ENCODE measurements at regions of chr20 and their contacts with region 1.

Region 1: GRCh38 chr20:2470423-2471193 is at the start of gene SNRPB:
- DNase-seq: peak; percentile 99
- ATAC-seq: peak; percentile 98
- H3K4me3 ChIP-seq: peak within 1 kb of the TSS; percentile 89 to 93 (median 90)
- H3K27ac ChIP-seq: peak within 1 kb of the TSS; percentile 89
- H3K4me1 ChIP-seq: peaks cover 52% of the 10 kb centered on the region
- H3K27me3 ChIP-seq: no peaks in the 10 kb centered on the region; a peak in 1 of 5 replicates
- CTCF ChIP-seq: peak; percentile 31
- EP300 ChIP-seq: peak; percentile 16 to 73; a peak in 2 of 4 replicates
- POLR2A ChIP-seq: peak; percentile 99 to 100
- RAD21 ChIP-seq: peak; percentile 71
- total RNA-seq, gene SNRPB: 778 and 844 TPM in 2 replicates

Region 2: DNA sequence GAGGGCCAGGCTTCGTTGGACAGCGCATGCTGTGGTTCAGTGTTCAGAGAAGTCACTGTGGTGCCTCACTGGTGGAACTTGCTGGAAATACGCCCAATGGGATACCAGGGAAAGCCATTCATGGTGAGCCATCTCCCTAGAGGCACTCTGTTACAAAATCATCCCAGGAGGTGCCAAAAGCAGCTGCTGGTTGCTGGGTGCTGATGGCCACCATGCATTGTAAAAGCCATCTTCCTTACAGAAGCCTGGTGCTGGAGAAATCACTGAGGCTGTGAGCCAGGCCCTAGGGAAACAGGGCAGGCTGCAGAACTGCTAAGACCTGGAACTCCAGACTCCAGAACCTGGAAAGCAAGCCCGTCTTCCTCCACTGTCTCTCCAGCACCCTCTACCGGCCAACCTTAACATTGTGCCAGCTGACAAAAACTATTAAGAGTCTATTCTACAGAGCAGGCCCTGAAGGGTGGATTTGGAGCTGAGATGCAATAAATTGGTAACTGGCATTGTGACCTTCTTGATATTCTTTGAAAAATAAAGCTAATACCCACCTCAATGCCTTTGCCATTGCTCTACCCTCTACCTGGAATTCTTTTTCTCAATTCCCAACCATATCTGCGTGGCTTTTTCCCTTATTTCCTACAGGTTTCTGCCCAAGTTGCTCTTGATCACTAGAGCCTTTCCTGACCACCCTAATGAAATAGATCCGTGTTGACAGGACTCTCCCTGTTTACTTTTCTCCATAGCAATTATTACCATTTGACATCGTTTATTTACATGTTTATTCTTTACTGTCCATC is 18.5 kb before region 1 on chr20:
- CTCF ChIA-PET with region 1: no interaction called
- POLR2A ChIA-PET with region 1: interaction called, 34 read pairs
- in situ Hi-C with region 1: no loop called
- intact Hi-C with region 1: loop called (anchors 1 kb)
- DNase-seq: peak; percentile 78
- ATAC-seq: peak; percentile 84
- H3K4me3 ChIP-seq: no peak overlapping the region
- H3K27ac ChIP-seq: no peak overlapping the region
- H3K4me1 ChIP-seq: no peaks in the 10 kb centered on the region
- H3K27me3 ChIP-seq: no peaks in the 10 kb centered on the region
- CTCF ChIP-seq: peak; percentile 93
- EP300 ChIP-seq: no peak
- POLR2A ChIP-seq: no peak
- RAD21 ChIP-seq: peak; percentile 49; the same call in 1 of the 2 replicates

Region 3: DNA sequence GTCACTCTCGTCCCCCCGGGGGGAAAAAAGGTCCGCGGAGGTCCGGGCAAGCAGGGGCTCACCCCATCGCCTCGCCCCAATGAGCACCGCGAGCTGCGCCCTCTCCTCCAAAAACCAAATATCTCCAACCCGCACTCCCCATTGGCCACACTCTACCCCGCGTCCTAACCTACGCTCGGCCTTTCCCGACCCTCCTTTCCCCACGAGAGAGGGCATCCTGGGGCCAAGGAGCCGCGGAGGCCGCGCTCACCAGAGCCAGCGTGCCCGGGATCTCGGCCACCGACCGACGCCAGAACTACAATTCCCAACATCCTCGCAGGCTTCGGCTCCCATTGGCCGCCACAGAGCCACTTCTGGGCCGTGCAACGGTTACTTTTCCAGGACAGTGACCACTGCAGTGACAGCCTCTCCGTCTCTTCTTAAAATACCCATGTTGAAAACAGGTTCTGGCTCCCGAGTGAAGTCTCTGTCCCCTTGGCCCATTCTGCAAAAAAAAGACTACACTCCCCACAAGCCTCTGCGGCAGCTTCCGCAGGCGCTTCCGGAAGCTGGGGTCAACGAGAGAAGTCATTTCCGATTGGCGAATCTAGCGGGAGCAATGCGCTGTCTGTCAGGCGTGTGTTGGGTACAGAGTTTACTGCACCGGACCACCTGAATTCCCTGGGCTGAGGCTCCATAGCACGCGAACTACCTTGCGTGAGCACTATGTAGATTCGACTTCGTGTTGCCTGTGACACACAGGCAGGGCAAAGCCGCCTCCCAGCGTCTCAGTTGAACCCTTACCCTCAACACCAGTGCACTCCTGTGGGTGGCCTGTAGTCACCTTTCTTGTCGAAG is 38.2 kb after region 1 on chr20 and contains the start of gene ZNF343:
- CTCF ChIA-PET with region 1: no interaction called
- POLR2A ChIA-PET with region 1: interaction called, 32 read pairs
- in situ Hi-C with region 1: no loop called
- intact Hi-C with region 1: loop called (anchors 2 kb)
- DNase-seq: peak; percentile 95
- ATAC-seq: peak; percentile 98
- H3K4me3 ChIP-seq: peak within 1 kb of the TSS; percentile 88 to 96 (median 91)
- H3K27ac ChIP-seq: peak within 1 kb of the TSS; percentile 79
- H3K4me1 ChIP-seq: peaks cover 23% of the 10 kb centered on the region
- H3K27me3 ChIP-seq: peaks cover 2 to 5% of the 10 kb centered on the region in 2 experiments; a peak in 3 of 5 replicates
- CTCF ChIP-seq: peak; percentile 44
- EP300 ChIP-seq: no peak; a peak in 1 of 4 replicates
- POLR2A ChIP-seq: peak; percentile 94 to 95
- RAD21 ChIP-seq: peak; percentile 33; the same call in 1 of the 2 replicates
- total RNA-seq, gene ZNF343: 22.1 and 28.8 TPM in 2 replicates

Region 4: GRCh38 chr20:2523919-2524708 is 53.5 kb after region 1 on chr20:
- CTCF ChIA-PET with region 1: no interaction called
- POLR2A ChIA-PET with region 1: interaction called, 14 read pairs
- in situ Hi-C with region 1: no loop called
- intact Hi-C with region 1: no loop called
- DNase-seq: peak; percentile 77
- ATAC-seq: peak; percentile 81
- H3K4me3 ChIP-seq: peak overlapping the region; percentile 80 to 88 (median 80)
- H3K27ac ChIP-seq: peak overlapping the region; percentile 22
- H3K4me1 ChIP-seq: peaks cover 24% of the 10 kb centered on the region
- H3K27me3 ChIP-seq: peaks cover 0 to 36% of the 10 kb centered on the region in 2 experiments; a peak in 2 of 5 replicates
- CTCF ChIP-seq: peak; percentile 99
- EP300 ChIP-seq: no peak; a peak in 1 of 4 replicates
- POLR2A ChIP-seq: peak; percentile 62 to 76
- RAD21 ChIP-seq: peak; percentile 76

Region 5: GRCh38 chr20:2538931-2539720 is 68.5 kb after region 1 on chr20:
- CTCF ChIA-PET with region 1: no interaction called
- POLR2A ChIA-PET with region 1: interaction called, 11 read pairs
- in situ Hi-C with region 1: no loop called
- intact Hi-C with region 1: no loop called
- DNase-seq: peak; percentile 40
- ATAC-seq: peak; percentile 54
- H3K4me3 ChIP-seq: no peak overlapping the region
- H3K27ac ChIP-seq: no peak overlapping the region
- H3K4me1 ChIP-seq: peaks cover 24% of the 10 kb centered on the region
- H3K27me3 ChIP-seq: peaks cover 12 to 45% of the 10 kb centered on the region in 2 experiments; a peak in 4 of 5 replicates
- CTCF ChIP-seq: no peak
- EP300 ChIP-seq: 0 out of 4 replicates have a peak, but pooled peaks of 1 of the 2 experiments have one; percentile 20
- POLR2A ChIP-seq: no peak
- RAD21 ChIP-seq: no peak

Region 6: DNA sequence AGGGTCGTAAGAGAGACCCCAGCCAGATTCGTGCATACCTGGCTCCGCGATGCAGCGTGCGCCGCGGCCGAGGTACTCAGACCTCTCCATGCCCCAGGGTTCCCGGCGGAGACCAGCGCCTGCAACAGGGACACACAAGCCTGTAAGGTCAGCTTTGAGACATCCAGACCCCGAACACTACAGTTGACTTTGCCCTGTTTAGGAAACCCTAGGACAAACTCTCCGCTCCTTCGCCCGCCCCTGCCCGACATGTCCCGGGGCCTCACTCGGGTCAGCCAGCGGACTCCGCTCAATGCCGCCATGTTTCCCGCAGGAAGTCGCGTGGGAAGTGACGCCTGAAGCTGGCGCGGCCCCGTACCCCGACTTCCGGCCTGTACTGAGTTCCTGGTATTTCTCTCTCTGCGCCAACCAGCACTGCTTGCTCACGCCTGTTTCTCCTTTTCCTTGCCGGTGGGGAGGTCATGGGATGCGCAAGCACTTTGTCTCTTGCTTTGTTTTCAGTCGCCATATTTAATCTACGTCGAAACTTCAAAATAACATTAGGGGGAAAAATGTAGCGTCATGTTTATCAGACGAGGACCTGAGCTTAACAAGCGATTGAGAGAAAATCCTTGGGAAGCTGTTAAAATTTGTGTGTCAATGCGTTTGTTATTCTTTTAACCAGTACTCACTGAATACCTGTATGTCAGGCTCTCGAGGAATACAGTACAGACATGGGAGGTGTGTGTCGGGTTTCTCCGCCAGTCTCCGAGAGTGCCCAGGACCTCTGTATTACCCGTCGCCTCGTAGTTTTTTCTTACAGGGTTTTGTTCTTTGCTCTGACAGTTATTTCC is 193.5 kb after region 1 on chr20 and contains the start of gene IDH3B:
- CTCF ChIA-PET with region 1: no interaction called
- POLR2A ChIA-PET with region 1: interaction called, 10 read pairs
- in situ Hi-C with region 1: no loop called
- intact Hi-C with region 1: no loop called
- DNase-seq: peak; percentile 96
- ATAC-seq: peak; percentile 82
- H3K4me3 ChIP-seq: peak within 1 kb of the TSS; percentile 92 to 99 (median 92)
- H3K27ac ChIP-seq: peak within 1 kb of the TSS; percentile 87
- H3K4me1 ChIP-seq: peaks cover 28% of the 10 kb centered on the region
- H3K27me3 ChIP-seq: peaks cover 0 to 14% of the 10 kb centered on the region in 2 experiments; a peak in 3 of 5 replicates
- CTCF ChIP-seq: peak; percentile 22
- EP300 ChIP-seq: peak; percentile 45 to 61; a peak in 3 of 4 replicates
- POLR2A ChIP-seq: peak; percentile 94 to 95
- RAD21 ChIP-seq: peak; percentile 45
- total RNA-seq, gene IDH3B: 215 and 246 TPM in 2 replicates